IMR-90 (cell line): ENCODE measurements at regions of chr7 and their contacts with region 1.

Region 1: GRCh38 chr7:149067876-149068275 is 22.6 kb downstream of the ZNF786 start:
- DNase-seq: no peak
- ATAC-seq: no peak
- H3K4me3 ChIP-seq: no peak overlapping the region
- H3K27ac ChIP-seq: no peak overlapping the region
- H3K4me1 ChIP-seq: no peaks in the 10 kb centered on the region
- H3K27me3 ChIP-seq: no peaks in the 10 kb centered on the region
- CTCF ChIP-seq: no peak
- POLR2A ChIP-seq: no peak
- RAD21 ChIP-seq: no peak

Region 2: DNA sequence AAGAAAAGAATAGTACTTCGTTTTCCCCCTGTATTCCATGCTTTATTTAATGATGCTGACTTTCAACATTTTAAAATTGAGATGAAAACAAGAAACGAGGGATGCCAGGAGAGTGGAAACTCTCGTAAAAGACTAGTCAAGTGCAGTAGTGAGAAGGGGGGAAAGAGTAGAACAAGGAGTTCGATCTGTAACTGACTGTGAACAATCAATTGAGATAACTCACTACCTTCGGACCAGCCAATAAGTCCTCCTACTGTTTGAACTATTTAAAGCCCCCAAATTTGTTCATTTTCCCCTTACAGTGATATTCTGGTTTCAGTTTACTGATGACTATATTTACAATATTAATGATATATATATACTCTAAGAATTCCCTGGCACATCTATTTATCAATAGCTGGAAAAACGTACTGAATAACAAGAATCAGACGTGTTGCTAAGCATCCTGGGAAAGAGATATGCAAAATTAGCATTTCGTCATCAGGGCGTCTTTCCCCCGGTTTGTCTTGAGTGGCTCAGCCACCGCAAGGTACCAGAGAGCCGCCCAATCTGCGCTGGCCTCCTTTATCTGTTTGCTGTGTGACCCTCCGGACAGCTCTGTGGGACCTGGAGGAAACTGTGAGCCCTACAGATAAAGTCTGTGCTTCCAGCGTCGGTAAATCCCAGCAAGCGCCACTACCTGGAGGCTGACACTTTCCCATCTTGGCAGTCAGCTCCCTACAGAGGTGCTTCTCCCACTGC is 80.7 kb before region 1 on chr7:
- CTCF ChIA-PET with region 1: interaction called, 6 read pairs
- POLR2A ChIA-PET with region 1: no interaction called
- dilution Hi-C with region 1: no loop called
- in situ Hi-C with region 1: no loop called
- intact Hi-C with region 1: loop called (anchors 5 kb)
- DNase-seq: peak; percentile 91
- ATAC-seq: peak; percentile 87
- H3K4me3 ChIP-seq: peak overlapping the region; percentile 74
- H3K27ac ChIP-seq: peak overlapping the region; percentile 11
- H3K4me1 ChIP-seq: peaks cover 1% of the 10 kb centered on the region; the same call in 1 of the 2 replicates
- H3K27me3 ChIP-seq: no peaks in the 10 kb centered on the region
- CTCF ChIP-seq: no peak
- POLR2A ChIP-seq: no peak
- RAD21 ChIP-seq: no peak

Region 3: GRCh38 chr7:149005241-149006050 is 62.4 kb before region 1 on chr7:
- CTCF ChIA-PET with region 1: interaction called, 5 read pairs
- POLR2A ChIA-PET with region 1: no interaction called
- dilution Hi-C with region 1: no loop called
- in situ Hi-C with region 1: no loop called
- intact Hi-C with region 1: loop called (anchors 1 kb)
- DNase-seq: peak; percentile 55
- ATAC-seq: peak; percentile 91
- H3K4me3 ChIP-seq: no peak overlapping the region
- H3K27ac ChIP-seq: no peak overlapping the region
- H3K4me1 ChIP-seq: no peaks in the 10 kb centered on the region
- H3K27me3 ChIP-seq: no peaks in the 10 kb centered on the region
- CTCF ChIP-seq: peak; percentile 67
- POLR2A ChIP-seq: no peak
- RAD21 ChIP-seq: peak; percentile 60

Region 4: DNA sequence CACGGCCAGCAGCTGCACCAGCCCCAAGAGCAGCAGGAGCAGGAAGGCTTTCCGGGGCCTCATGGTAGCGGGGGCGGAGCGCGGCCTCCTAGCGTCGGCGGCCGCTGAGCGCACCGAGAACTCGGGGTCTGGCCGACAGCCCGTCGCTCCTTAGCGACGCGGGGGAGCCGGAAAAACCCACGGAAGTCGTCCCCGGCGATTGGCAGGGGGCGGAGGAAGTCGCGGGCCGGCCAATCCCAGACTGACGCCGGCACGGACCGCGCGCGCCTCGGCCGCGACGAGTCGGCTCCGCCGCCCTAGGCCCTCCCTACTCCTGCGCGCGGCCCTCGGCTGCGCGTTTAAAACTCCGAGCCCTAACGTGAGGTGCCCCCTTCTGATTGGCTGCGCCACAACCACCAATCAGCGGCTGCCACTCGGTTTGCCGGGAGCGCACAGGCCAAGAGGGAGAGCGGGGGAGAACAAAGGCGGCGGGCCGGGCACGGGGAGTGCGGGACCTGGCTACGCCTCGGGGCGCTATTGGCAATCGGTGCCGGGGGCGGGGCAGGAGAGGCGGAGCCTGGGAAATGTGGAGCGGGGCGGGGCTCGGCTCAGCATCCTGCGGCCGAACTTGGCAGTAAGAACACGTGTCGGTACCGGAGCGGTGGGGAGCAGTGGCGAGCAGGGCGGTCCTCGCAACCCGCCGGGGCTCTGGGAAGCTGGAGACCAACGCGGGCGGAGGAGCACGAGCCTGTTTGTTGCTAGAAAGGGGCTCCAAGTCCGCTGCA is 39.3 kb before region 1 on chr7 and contains the start of gene PDIA4:
- CTCF ChIA-PET with region 1: interaction called, 13 read pairs
- POLR2A ChIA-PET with region 1: interaction called, 6 read pairs
- dilution Hi-C with region 1: no loop called
- in situ Hi-C with region 1: no loop called
- intact Hi-C with region 1: loop called (anchors 1 kb)
- DNase-seq: peak; percentile 99
- ATAC-seq: peak; percentile 95
- H3K4me3 ChIP-seq: peak within 1 kb of the TSS; percentile 84
- H3K27ac ChIP-seq: peak within 1 kb of the TSS; percentile 63
- H3K4me1 ChIP-seq: no peaks in the 10 kb centered on the region
- H3K27me3 ChIP-seq: no peaks in the 10 kb centered on the region
- CTCF ChIP-seq: peak; percentile 34; the same call in 1 of the 2 replicates
- POLR2A ChIP-seq: peak; percentile 59
- RAD21 ChIP-seq: peak; percentile 9; the same call in 1 of the 2 replicates
- total RNA-seq, gene PDIA4: 277 and 304 TPM in 2 replicates